Prostate gland (tissue), 2 donors: ENCODE measurements at regions of chr2 and their contacts with region 1.

Region 1: DNA sequence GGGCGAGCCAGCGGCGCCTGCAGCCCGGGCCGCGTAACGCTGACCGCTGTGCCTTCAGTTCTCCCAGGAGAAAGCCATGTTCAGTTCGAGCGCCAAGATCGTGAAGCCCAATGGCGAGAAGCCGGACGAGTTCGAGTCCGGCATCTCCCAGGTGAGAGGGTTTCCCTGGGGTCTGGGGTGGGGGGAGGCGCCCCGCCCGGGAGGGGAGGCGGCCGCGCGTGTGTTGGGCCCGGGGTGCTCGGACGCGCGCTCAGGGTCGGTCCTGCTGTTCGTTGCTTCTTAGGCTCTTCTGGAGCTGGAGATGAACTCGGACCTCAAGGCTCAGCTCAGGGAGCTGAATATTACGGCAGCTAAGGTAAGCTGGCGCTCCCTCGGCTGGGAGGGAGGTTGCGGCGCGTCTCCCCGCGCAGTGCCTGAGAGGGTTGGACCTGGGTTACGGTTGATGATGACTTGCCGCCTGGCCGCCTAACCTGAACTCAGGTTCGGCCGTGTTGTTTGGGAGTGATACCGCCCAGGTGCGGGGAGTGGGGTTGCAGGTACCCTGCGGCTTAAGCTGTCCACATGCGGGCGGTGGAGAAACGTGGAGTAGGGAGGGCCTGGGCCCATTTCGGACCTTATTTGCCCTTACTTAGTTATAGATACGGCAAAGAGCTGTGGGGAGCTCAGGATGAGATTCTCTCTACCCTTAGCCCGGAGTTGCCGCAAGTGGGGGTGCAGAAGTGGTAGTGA is 638 bp downstream of the RPS7 start:
- DNase-seq: peak; percentile 11
- H3K4me3 ChIP-seq: peak overlapping the region; percentile 66 to 85
- H3K27ac ChIP-seq: peak overlapping the region; percentile 82 to 85
- H3K4me1 ChIP-seq: peaks cover 3% of the 10 kb centered on the region
- H3K27me3 ChIP-seq: no peaks in the 10 kb centered on the region
- CTCF ChIP-seq: no peak
- POLR2A ChIP-seq: no peak

Region 2: GRCh38 chr2:3379647-3380534 is 195.8 kb before region 1 on chr2 and contains the start of gene TRAPPC12:
- intact Hi-C with region 1: loop called (anchors 5 kb)
- DNase-seq: peak; percentile 77
- H3K4me3 ChIP-seq: peak within 1 kb of the TSS; percentile 61 to 72
- H3K27ac ChIP-seq: peak within 1 kb of the TSS; percentile 82 to 91
- H3K4me1 ChIP-seq: no peaks in the 10 kb centered on the region
- H3K27me3 ChIP-seq: no peaks in the 10 kb centered on the region
- CTCF ChIP-seq: peak in 3 of 4 experiments; percentile 38 to 57 (median 47)
- POLR2A ChIP-seq: peak; percentile 74
- total RNA-seq, gene TRAPPC12: 114 to 128 TPM

Region 3: GRCh38 chr2:3461801-3462492 is 113.8 kb before region 1 on chr2:
- intact Hi-C with region 1: loop called (anchors 5 kb)
- DNase-seq: no peak
- H3K4me3 ChIP-seq: no peak overlapping the region
- H3K27ac ChIP-seq: peak overlapping the region in 1 of 2 donors; percentile 27
- H3K4me1 ChIP-seq: no peaks in the 10 kb centered on the region
- H3K27me3 ChIP-seq: no peaks in the 10 kb centered on the region
- CTCF ChIP-seq: peak; percentile 84 to 95 (median 88)
- POLR2A ChIP-seq: no peak

Region 4: GRCh38 chr2:3519255-3520205 is 56.2 kb before region 1 on chr2 and contains the start of gene ADI1:
- intact Hi-C with region 1: loop called (anchors 5 kb)
- DNase-seq: peak; percentile 75
- H3K4me3 ChIP-seq: peak within 1 kb of the TSS; percentile 85 to 95
- H3K27ac ChIP-seq: peak within 1 kb of the TSS; percentile 98 to 99
- H3K4me1 ChIP-seq: peaks cover 7% of the 10 kb centered on the region
- H3K27me3 ChIP-seq: no peaks in the 10 kb centered on the region
- CTCF ChIP-seq: no peak
- POLR2A ChIP-seq: peak; percentile 52
- total RNA-seq, gene ADI1: 81.7 to 270 TPM

Region 5: DNA sequence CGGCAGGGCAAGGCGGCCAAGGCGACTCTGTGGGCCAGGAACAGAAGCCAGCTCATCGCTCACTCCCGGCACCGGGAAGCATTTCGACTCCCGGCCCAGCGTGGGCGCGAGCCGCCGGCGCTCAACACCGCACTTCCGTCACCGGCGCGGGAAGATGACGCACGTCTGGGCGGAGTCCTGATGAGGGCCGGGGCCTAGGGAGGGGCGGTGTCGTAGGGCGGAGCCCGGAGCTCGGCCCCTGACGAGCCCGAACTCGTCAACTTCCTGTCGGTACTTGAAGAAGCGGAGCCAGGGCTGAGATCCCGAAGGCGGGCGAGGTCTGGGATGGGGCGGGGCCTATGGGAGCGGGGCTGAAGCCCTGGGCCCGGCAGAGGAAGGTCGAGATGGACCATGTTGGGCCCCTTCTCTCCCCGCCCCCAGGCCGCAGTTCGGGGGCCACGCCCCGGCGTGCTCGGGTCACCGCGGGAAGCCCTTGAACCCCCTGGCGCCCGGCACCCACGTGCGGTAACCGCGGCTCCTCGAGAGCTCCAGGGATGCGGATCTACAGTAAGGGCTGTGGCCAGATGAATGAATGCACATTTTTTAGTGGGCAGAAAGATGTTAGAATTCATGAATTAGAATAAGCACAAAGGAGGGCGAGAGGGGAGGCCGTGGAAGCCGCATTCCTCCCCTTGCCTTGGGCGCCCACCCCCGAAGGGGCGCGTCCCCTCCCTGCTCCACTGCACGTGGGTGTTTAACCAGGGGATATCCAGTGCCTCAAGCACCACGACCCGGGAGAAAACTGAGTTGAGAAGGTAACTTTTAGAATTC is 17.3 kb before region 1 on chr2 and contains the start of gene RNASEH1:
- intact Hi-C with region 1: loop called (anchors 2 kb)
- DNase-seq: peak; percentile 97
- H3K4me3 ChIP-seq: peak within 1 kb of the TSS; percentile 94 to 99
- H3K27ac ChIP-seq: peak within 1 kb of the TSS; percentile 80 to 90
- H3K4me1 ChIP-seq: no peaks in the 10 kb centered on the region
- H3K27me3 ChIP-seq: no peaks in the 10 kb centered on the region
- CTCF ChIP-seq: no peak
- POLR2A ChIP-seq: peak; percentile 66
- total RNA-seq, gene RNASEH1: 19.1 to 31.5 TPM

Region 6: GRCh38 chr2:3628800-3629199 is 53.1 kb after region 1 on chr2:
- intact Hi-C with region 1: no loop called
- DNase-seq: no peak
- H3K4me3 ChIP-seq: no peak overlapping the region
- H3K27ac ChIP-seq: no peak overlapping the region
- H3K4me1 ChIP-seq: no peaks in the 10 kb centered on the region
- H3K27me3 ChIP-seq: no peaks in the 10 kb centered on the region
- CTCF ChIP-seq: no peak
- POLR2A ChIP-seq: no peak

Region 7: DNA sequence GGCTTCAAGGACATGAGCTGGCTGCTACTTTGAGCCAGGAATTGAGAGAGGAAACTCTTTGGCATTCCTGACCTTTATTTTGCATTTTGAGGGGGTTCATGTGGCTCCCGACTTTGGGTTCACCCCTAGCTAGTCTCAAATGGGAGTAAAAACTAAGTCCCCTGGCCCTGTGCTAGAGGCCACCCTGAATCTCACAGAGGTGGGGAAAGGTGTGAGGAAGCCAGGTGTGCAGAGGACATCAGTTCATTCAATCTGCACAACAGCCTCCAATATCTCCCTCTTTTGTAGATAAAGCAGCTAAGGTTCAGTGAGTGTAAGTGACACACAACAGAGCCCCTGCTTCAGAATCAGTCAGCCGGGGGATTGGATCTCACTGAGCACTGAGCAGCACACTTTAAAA is 453.4 kb after region 1 on chr2:
- intact Hi-C with region 1: no loop called
- DNase-seq: no peak
- H3K4me3 ChIP-seq: no peak overlapping the region
- H3K27ac ChIP-seq: no peak overlapping the region
- H3K4me1 ChIP-seq: no peaks in the 10 kb centered on the region
- H3K27me3 ChIP-seq: no peaks in the 10 kb centered on the region
- CTCF ChIP-seq: no peak
- POLR2A ChIP-seq: no peak